ENCODE measurements at regions of chr2 and their contacts with region 1.

Region 1: GRCh38 chr2:191555092-191555742 is 122.7 kb upstream of the NABP1 start:
- DNase-seq: peak; percentile 89
- ATAC-seq: peak; percentile 94
- H3K4me3 Mint-ChIP-seq: no peak overlapping the region
- H3K27ac Mint-ChIP-seq: no peak overlapping the region
- H3K4me1 Mint-ChIP-seq: peaks cover 2% of the 10 kb centered on the region
- H3K27me3 Mint-ChIP-seq: peaks cover 9% of the 10 kb centered on the region
- CTCF ChIP-seq: peak; percentile 85

Region 2: GRCh38 chr2:191302459-191303139 is 252.6 kb before region 1 on chr2:
- CTCF ChIA-PET with region 1: no interaction called
- POLR2A ChIA-PET with region 1: no interaction called
- intact Hi-C with region 1: no loop called
- DNase-seq: peak; percentile 23
- ATAC-seq: peak; percentile 55
- H3K4me3 Mint-ChIP-seq: no peak overlapping the region
- H3K27ac Mint-ChIP-seq: no peak overlapping the region
- H3K4me1 Mint-ChIP-seq: peaks cover 1% of the 10 kb centered on the region
- H3K27me3 Mint-ChIP-seq: peaks cover 4% of the 10 kb centered on the region
- CTCF ChIP-seq: no peak

Region 3: DNA sequence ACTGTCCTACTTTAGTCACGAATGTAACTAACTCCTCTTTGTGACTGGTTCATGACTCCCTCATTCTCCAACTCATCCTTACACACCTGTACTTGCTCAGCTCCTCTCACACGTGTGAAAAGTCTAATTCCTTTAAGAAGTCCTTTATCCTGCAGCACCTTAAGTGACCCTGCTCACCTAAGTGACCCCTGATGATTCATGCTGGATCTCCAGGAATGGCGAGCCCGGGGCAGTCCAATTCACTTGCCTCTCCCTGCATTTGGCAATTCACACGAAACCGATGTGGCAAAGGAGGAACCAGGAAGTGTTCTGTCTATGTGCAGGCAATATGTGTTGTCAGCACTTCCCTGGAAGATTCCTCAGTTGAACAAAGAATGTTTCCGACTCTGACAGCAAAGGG is 67.1 kb before region 1 on chr2:
- CTCF ChIA-PET with region 1: no interaction called
- POLR2A ChIA-PET with region 1: no interaction called
- intact Hi-C with region 1: no loop called
- DNase-seq: no peak
- ATAC-seq: no peak
- H3K4me3 Mint-ChIP-seq: no peak overlapping the region
- H3K27ac Mint-ChIP-seq: no peak overlapping the region
- H3K4me1 Mint-ChIP-seq: no peaks in the 10 kb centered on the region
- H3K27me3 Mint-ChIP-seq: peaks cover 2% of the 10 kb centered on the region
- CTCF ChIP-seq: no peak

Region 4: DNA sequence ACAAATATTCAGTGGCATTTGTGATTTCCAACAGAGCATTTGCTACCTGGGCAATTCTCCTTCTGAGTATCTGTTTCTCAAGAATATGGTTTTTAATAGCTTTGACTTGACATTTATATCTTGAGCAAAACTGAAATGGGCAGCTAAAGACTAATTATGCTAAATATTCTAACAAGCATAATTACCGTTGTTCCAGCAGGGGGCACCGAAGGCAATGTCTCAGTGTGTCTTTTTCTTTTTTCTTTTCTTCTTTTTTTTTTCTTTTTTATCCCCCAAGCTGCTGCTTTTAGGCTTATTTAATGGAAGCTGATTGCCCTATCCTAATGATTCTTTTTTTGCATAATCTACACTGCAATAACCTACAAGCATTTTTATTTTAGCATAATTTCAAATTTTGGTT is 16.1 kb before region 1 on chr2:
- CTCF ChIA-PET with region 1: interaction called, 25 read pairs
- POLR2A ChIA-PET with region 1: no interaction called
- intact Hi-C with region 1: no loop called
- DNase-seq: peak; percentile 63
- ATAC-seq: no peak
- H3K4me3 Mint-ChIP-seq: no peak overlapping the region
- H3K27ac Mint-ChIP-seq: no peak overlapping the region
- H3K4me1 Mint-ChIP-seq: no peaks in the 10 kb centered on the region
- H3K27me3 Mint-ChIP-seq: no peaks in the 10 kb centered on the region
- CTCF ChIP-seq: peak; percentile 67

Region 5: DNA sequence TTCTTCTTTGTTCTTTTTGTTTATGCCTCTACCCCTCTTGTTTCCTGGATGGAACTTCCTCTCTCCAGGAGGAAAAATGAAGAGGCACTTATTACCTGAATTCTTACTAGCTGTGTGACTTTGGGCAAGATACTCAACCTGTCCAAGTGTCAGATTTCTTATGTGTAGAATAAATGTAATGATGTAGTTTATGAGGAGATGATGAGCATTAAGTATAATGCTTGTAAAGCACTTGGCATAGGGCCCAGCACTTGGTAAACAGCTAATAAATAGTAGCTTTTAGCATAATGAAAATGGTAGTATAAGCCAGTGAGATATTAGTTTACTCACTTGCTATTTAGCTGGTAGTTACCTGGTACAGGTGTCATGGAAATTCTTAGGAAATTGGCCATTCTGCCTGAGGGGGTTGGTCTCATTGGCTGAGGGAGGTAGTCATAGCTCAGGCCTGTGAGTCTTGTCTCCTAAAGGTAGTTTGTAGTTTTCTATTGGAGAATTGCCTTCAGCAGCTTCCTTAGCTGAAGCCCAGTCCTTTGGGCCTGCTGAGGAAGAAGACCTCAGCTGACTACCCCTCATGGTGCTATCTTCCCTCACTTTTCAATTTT is 10.7 kb before region 1 on chr2:
- CTCF ChIA-PET with region 1: interaction called, 25 read pairs
- POLR2A ChIA-PET with region 1: no interaction called
- intact Hi-C with region 1: no loop called
- DNase-seq: no peak
- ATAC-seq: no peak
- H3K4me3 Mint-ChIP-seq: no peak overlapping the region
- H3K27ac Mint-ChIP-seq: no peak overlapping the region
- H3K4me1 Mint-ChIP-seq: no peaks in the 10 kb centered on the region
- H3K27me3 Mint-ChIP-seq: no peaks in the 10 kb centered on the region
- CTCF ChIP-seq: no peak

Region 6: DNA sequence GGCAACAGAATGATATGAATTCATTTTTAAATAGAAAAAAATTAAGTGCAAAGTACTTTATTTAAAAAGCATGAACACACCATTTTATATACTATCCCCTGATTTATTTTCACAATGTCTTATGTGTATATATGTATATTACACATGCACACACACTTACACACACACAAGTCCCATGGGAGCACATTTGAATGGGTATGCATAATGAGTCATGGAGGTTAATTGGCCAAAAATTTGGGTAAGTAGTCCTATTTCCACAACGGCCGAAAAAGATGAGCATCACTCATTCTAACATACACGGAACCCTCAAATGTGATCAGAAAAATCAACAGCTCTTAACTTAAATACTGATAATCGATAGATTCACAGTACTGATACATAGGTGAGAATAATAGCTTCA is 25.4 kb after region 1 on chr2:
- CTCF ChIA-PET with region 1: no interaction called
- POLR2A ChIA-PET with region 1: no interaction called
- intact Hi-C with region 1: no loop called
- DNase-seq: no peak
- ATAC-seq: no peak
- H3K4me3 Mint-ChIP-seq: no peak overlapping the region
- H3K27ac Mint-ChIP-seq: no peak overlapping the region
- H3K4me1 Mint-ChIP-seq: peaks cover 4% of the 10 kb centered on the region
- H3K27me3 Mint-ChIP-seq: no peaks in the 10 kb centered on the region
- CTCF ChIP-seq: no peak

Region 7: DNA sequence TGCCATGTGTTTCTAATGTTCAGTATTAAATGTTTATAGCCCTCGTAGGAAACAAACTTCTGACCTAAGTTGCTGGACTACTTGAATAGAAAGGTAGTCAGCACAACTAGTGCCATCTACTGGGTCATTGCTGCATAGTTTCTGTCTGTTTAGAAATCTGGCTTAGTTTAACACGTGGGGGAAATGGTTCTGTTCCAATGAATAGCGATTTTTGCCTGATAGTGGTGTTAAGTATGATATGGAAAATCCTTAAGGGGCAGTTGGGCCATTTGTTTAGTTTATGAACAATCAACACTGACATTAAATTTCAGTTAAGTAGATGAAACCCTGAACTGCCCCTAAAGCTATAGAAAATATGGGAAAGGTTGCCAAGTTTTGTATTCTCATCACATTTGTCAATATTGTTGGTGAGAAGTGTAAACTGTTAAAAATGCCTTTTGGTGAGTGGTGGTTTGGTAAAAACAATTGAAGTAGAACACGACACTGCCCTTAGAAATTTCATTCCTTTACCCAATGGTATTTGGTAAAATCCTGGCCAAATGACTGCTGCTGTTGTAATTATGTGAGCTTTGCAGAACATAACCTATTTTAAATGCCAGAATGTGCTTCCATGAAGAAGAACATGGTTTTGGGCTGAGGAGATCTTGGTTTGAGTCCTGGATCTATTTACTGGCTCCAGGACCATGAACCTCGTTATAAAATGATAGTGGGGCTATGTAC is 136.0 kb after region 1 on chr2:
- CTCF ChIA-PET with region 1: interaction called, 10 read pairs
- POLR2A ChIA-PET with region 1: interaction called, 3 read pairs
- intact Hi-C with region 1: no loop called
- DNase-seq: peak; percentile 72
- ATAC-seq: peak; percentile 74
- H3K4me3 Mint-ChIP-seq: no peak overlapping the region
- H3K27ac Mint-ChIP-seq: no peak overlapping the region
- H3K4me1 Mint-ChIP-seq: peaks cover 57% of the 10 kb centered on the region
- H3K27me3 Mint-ChIP-seq: no peaks in the 10 kb centered on the region
- CTCF ChIP-seq: peak; percentile 60

Region 8: GRCh38 chr2:191789796-191790195 is 234.6 kb after region 1 on chr2:
- CTCF ChIA-PET with region 1: interaction called, 3 read pairs
- POLR2A ChIA-PET with region 1: no interaction called
- intact Hi-C with region 1: loop called (anchors 10 kb)
- DNase-seq: no peak
- ATAC-seq: no peak
- H3K4me3 Mint-ChIP-seq: no peak overlapping the region
- H3K27ac Mint-ChIP-seq: no peak overlapping the region
- H3K4me1 Mint-ChIP-seq: no peaks in the 10 kb centered on the region
- H3K27me3 Mint-ChIP-seq: peaks cover 15% of the 10 kb centered on the region
- CTCF ChIP-seq: no peak

Region 9: DNA sequence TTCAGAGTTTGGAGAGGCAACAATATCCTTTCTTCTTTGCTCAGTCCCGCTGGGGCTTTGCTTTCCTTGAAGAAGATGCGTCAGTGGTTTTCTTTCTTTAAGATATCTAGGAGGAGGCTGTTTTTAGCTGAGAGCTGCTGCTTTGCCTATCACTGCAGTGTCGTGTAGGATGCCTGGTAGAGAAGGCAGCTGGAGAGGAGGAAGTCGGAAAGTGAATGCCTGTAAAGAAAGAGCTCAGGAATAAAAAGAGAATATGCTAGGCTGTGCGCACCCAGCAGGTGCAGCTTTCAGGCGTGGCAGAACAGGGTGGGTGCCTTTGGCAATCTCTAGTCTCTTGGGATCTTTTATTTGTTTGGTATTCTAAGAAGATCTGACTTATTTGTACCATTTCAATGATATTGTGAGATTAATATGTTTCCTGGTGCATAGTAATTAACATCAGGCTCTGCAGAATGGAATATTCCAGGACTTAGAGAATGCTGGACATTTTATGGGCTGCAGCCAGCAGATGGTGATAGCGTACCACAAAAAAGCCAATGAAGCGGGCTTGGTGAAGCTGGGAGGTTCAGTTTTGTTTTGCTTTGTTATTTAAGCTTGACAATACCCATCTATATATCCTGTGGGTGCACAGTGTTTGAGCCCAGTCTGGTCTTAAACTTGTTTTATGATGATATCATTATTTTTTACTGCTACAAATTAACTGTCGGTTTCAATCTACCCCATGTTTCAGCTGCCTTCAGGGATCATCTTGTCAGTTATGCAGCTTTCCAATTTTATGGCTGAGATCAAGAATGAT is 256.8 kb after region 1 on chr2:
- CTCF ChIA-PET with region 1: interaction called, 11 read pairs
- POLR2A ChIA-PET with region 1: no interaction called
- intact Hi-C with region 1: no loop called
- DNase-seq: peak; percentile 52
- ATAC-seq: no peak
- H3K4me3 Mint-ChIP-seq: no peak overlapping the region
- H3K27ac Mint-ChIP-seq: no peak overlapping the region
- H3K4me1 Mint-ChIP-seq: no peaks in the 10 kb centered on the region
- H3K27me3 Mint-ChIP-seq: peaks cover 12% of the 10 kb centered on the region
- CTCF ChIP-seq: peak; percentile 63

Region 10: DNA sequence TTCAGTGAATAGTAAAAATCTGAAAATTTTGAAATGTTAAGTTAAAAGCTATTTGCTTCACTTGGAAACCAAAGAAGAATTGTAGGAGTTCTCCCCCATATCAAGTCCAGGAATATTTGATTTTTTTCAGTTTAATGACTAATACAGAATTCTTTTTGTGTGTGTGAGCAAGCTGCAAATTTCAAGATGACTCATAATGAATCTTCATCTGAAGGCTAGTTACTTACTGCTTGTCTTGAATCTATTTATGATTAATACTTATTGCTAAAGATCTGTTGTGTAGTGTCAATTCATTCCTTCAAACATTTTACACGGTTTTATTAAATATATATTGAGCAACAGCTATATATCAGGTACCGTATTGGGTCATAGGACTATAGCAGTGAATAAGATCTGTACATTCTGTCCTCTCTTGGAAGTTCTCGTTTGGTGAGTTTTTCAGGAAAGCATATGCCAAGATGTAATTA is 339.5 kb after region 1 on chr2:
- CTCF ChIA-PET with region 1: no interaction called
- POLR2A ChIA-PET with region 1: no interaction called
- intact Hi-C with region 1: no loop called
- DNase-seq: no peak
- ATAC-seq: no peak
- H3K4me3 Mint-ChIP-seq: no peak overlapping the region
- H3K27ac Mint-ChIP-seq: no peak overlapping the region
- H3K4me1 Mint-ChIP-seq: no peaks in the 10 kb centered on the region
- H3K27me3 Mint-ChIP-seq: peaks cover 10% of the 10 kb centered on the region
- CTCF ChIP-seq: no peak

Measured in activated CD8-positive, alpha-beta T cell treated with anti-CD3 and anti-CD28 coated beads for 36 hours (primary cell).